H1 (cell line): ENCODE measurements at regions of chr11 and their contacts with region 1.

Region 1: DNA sequence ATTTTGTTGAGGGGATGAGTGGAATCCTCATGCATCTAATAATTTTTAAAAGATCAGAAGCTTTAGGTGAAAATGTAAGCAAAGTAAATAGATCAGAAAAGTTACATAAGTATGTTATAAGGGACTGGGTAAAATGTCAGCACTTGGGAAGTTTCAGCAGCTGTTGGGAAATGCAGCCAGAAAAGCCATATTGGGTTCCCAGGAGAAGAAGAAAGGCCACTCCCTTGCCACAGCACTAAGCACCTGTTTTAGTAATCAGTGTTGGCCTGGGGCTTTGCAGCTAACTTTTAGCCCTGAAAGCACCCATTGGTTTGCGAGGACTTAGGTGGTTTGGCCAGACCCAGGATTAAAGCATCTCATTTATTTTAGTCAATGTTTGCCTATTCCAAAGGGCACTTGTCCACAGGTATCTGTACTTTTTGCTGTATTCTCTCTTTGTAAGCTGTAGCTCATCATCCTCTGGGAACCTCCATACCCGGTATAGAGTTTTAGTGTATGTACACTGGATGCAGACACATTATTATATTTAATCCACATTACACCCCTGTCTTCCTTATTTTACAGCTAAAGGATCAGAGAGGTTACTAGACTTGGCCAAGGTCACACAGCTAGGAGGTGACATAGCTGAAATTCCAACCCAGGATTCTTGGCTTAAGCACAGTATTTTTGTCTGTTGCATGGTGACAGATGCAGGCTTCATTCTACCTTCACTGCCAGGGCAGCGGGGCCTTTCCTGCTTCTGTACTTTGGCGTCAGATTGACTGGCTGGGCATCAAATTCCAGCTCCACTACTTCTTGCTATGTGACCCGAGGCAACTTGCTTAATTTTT is 127.7 kb upstream of the SESN3 start:
- DNase-seq: no peak
- H3K4me3 ChIP-seq: no peak overlapping the region
- H3K27ac ChIP-seq: no peak overlapping the region
- H3K4me1 ChIP-seq: peaks cover 9 to 14% (median 12%) of the 10 kb centered on the region in 4 experiments; a peak in 6 of 7 replicates
- H3K27me3 ChIP-seq: no peaks in the 10 kb centered on the region
- CTCF ChIP-seq: no peak
- EP300 ChIP-seq: no peak
- POLR2A ChIP-seq: no peak
- RAD21 ChIP-seq: no peak

Region 2: GRCh38 chr11:95371153-95371552 is 12.4 kb after region 1 on chr11:
- CTCF ChIA-PET with region 1: interaction called, 12 read pairs
- POLR2A ChIA-PET with region 1: no interaction called
- DNase-seq: no peak
- H3K4me3 ChIP-seq: no peak overlapping the region
- H3K27ac ChIP-seq: no peak overlapping the region
- H3K4me1 ChIP-seq: peaks cover 0 to 4% (median 1%) of the 10 kb centered on the region in 4 experiments; a peak in 2 of 7 replicates
- H3K27me3 ChIP-seq: no peaks in the 10 kb centered on the region
- CTCF ChIP-seq: no peak
- EP300 ChIP-seq: no peak
- POLR2A ChIP-seq: no peak
- RAD21 ChIP-seq: no peak